ENCODE measurements at regions of chr2 and their contacts with region 1.

Region 1: DNA sequence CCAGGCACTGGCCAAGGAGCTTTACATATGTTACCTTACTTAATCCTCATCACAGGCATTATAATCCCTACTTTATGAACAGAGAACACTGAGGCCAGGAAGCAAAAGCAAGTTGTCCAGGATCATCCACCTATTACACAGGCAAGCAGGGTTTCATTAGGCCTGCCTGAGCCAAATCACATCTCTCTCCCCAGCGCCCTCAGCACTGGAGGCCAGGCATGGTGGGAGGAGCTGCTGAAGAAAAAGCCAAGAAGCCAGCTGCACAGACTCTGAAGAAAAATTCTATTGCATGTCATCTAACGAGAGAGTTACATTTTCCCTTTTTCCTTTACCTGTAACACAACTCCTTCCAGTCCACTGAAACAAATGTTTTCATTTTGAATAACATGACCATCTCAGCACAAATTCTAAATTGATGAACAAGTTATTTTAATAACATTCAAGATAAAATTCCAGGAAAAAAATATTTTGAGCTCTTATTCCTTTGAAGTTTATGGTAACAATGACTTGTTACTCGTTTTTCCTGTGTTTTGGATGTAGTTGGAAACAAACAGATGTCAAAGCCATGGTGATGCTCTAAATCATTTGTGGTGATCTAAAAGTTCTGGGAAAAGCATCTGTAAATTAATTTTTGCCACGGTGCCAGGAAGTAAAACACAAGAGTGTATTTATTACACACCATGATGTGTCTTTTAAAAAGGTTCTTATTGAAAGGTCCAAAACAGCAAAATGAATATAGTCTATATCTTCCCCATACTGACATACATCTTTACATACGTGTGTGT is 139.0 kb upstream of the ITGB6 start:
- DNase-seq: no peak
- H3K4me3 ChIP-seq: no peak overlapping the region
- H3K4me3 Mint-ChIP-seq: no peak overlapping the region
- H3K27ac Mint-ChIP-seq: no peak overlapping the region
- H3K4me1 ChIP-seq: no peaks in the 10 kb centered on the region
- H3K4me1 Mint-ChIP-seq: no peaks in the 10 kb centered on the region
- H3K27me3 ChIP-seq: no peaks in the 10 kb centered on the region
- H3K27me3 Mint-ChIP-seq: no peaks in the 10 kb centered on the region
- CTCF ChIP-seq: no peak

Region 2: GRCh38 chr2:160166002-160166401 is 173.1 kb before region 1 on chr2:
- CTCF ChIA-PET with region 1: no interaction called
- POLR2A ChIA-PET with region 1: no interaction called
- intact Hi-C with region 1: no loop called
- DNase-seq: no peak
- H3K4me3 ChIP-seq: no peak overlapping the region
- H3K4me3 Mint-ChIP-seq: no peak overlapping the region
- H3K27ac Mint-ChIP-seq: no peak overlapping the region
- H3K4me1 ChIP-seq: peaks cover 11% of the 10 kb centered on the region
- H3K4me1 Mint-ChIP-seq: peaks cover 16% of the 10 kb centered on the region
- H3K27me3 ChIP-seq: no peaks in the 10 kb centered on the region
- H3K27me3 Mint-ChIP-seq: no peaks in the 10 kb centered on the region
- CTCF ChIP-seq: no peak

Region 3: GRCh38 chr2:162041485-162041884 is 1702.4 kb after region 1 on chr2:
- CTCF ChIA-PET with region 1: no interaction called
- POLR2A ChIA-PET with region 1: no interaction called
- intact Hi-C with region 1: loop called (anchors 5 kb)
- DNase-seq: no peak
- H3K4me3 ChIP-seq: no peak overlapping the region
- H3K4me3 Mint-ChIP-seq: no peak overlapping the region
- H3K27ac Mint-ChIP-seq: no peak overlapping the region
- H3K4me1 ChIP-seq: no peaks in the 10 kb centered on the region
- H3K4me1 Mint-ChIP-seq: no peaks in the 10 kb centered on the region
- H3K27me3 ChIP-seq: no peaks in the 10 kb centered on the region
- H3K27me3 Mint-ChIP-seq: no peaks in the 10 kb centered on the region
- CTCF ChIP-seq: no peak